Activated CD4-positive, alpha-beta T cell treated with anti-CD3 and anti-CD28 coated beads for 36 hours (primary cell): ENCODE measurements at regions of chr12 and their contacts with region 1.

Region 1: DNA sequence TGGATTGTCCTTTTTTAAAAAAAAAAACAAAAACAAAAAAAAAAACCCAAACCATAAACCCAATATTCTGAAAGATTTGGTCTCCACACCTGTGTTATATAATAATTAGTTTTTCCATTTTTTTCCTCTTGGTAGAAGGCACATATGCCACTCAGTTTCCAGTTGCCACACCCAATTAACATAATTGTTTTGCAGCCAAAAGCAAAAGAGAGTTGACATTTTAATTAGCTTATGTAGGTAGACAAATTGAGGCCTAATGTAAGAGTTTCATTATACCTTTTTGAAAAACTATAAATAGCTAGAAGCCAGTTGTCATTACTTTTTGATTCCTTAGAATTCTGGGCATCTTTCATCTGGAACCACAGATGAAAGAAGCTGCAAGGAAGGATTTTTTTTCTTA is 21.0 kb downstream of the PTPN11 start:
- DNase-seq: no peak
- ATAC-seq: no peak
- H3K4me3 Mint-ChIP-seq: no peak overlapping the region
- H3K27ac Mint-ChIP-seq: no peak overlapping the region
- H3K4me1 Mint-ChIP-seq: peaks cover 10% of the 10 kb centered on the region
- H3K27me3 Mint-ChIP-seq: no peaks in the 10 kb centered on the region

Region 2: DNA sequence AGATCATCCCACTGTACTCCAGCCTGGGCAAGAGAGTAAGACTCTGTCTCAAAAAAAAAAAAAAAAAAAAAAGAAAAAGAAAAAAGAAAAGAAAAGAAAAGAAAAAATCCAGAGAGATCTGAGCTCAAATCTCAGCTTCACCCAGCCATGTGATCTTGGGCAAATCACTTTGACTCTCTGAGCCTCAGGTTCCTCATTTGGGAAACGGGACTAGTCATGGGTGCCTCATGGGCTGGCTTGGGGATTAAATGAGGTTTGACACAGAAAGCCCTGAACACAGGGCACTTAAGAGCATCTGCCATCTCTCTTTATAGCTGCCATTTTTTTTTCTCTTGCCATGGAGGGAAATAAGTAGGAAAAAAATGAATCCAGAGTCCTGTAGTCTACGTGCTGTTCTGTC is 1433.1 kb before region 1 on chr12:
- CTCF ChIA-PET with region 1: no interaction called
- POLR2A ChIA-PET with region 1: interaction called, 10 read pairs
- intact Hi-C with region 1: no loop called
- DNase-seq: no peak
- ATAC-seq: no peak
- H3K4me3 Mint-ChIP-seq: no peak overlapping the region
- H3K27ac Mint-ChIP-seq: no peak overlapping the region
- H3K4me1 Mint-ChIP-seq: no peaks in the 10 kb centered on the region
- H3K27me3 Mint-ChIP-seq: peaks cover 27% of the 10 kb centered on the region

Region 3: DNA sequence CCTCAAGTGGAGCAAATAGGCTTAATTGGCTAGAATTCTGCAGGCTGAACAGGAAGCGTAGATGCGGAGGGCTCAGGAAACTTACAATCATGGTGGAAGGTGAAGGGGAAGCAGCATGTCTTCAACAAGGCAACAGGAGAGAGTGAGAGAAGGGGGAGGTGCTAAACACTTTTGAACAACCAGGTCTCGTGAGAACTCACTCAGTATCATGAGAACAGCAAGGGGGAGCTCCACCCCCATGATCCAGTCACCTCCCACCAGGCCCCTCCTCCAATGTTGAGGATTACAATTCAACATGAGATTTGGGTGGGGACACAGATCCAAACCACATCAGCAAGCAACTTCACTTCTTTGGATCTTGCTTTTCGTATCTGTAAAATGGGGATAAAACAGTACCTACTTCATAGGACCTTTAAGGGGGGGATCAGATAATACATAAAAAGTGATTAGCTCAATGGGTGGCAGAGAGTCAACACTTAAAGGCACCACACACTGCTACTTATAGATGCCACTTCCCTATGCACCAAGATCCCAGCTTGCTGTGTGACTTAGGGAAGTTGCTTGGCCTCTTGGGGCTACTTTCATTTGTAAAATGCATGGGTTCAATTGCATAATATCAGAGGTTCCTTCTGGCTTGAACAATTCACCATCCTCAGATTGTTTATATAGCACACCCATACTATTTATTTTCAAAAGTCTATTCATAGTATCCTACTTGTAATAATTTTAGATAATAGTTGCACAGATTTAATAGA is 167.0 kb after region 1 on chr12:
- CTCF ChIA-PET with region 1: no interaction called
- POLR2A ChIA-PET with region 1: no interaction called
- intact Hi-C with region 1: no loop called
- DNase-seq: no peak
- ATAC-seq: no peak
- H3K4me3 Mint-ChIP-seq: no peak overlapping the region
- H3K27ac Mint-ChIP-seq: no peak overlapping the region
- H3K4me1 Mint-ChIP-seq: no peaks in the 10 kb centered on the region
- H3K27me3 Mint-ChIP-seq: peaks cover 25% of the 10 kb centered on the region